Transverse colon (tissue), 4 donors: ENCODE measurements at regions of chr5 and their contacts with region 1.

Region 1: DNA sequence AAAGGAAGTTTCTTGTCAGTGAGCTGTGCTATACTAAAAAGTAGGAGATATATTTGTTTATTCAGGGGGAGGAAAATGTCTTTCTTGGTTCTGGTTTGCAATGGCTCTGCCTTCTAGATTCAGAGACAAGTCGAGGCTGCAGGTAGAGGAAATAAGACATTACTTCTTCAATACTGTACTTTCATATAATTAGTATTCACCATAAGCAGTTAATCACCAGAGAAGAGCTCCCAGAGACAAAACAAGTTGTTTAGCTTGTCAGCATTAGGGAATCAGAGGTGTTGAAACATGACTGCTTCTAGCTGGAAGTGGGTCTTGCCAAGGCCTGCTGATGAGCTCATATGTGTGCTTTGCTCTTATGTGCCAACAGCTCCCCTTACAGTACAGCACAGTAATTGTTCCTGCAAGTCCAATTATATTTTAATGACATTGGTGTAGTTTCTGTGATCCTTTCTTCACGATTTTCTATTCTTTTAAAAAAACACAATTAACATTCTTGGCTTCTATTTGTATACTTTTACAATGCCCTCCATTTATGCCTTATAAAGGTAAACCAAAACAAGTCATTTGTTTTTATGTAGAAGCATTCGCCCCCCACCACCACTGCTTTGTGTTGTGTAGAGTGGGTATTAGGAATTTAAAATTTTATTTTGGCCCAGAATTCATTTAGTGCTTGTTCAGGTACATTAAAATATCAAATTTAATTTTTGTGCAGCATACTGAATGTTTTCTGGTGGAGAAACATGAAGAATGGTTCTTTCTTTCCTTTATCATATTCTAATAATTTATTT is 112.2 kb downstream of the RPS23 start:
- DNase-seq: peak; percentile 61
- H3K4me3 ChIP-seq: no peak overlapping the region
- H3K27ac ChIP-seq: peak overlapping the region; percentile 45 to 65 (median 56)
- H3K4me1 ChIP-seq: peaks cover 4 to 26% (median 8%) of the 10 kb centered on the region in 4 donors
- H3K27me3 ChIP-seq: no peaks in the 10 kb centered on the region
- CTCF ChIP-seq: peak; percentile 65 to 69 (median 68)
- EP300 ChIP-seq: no peak
- POLR2A ChIP-seq: no peak

Region 2: DNA sequence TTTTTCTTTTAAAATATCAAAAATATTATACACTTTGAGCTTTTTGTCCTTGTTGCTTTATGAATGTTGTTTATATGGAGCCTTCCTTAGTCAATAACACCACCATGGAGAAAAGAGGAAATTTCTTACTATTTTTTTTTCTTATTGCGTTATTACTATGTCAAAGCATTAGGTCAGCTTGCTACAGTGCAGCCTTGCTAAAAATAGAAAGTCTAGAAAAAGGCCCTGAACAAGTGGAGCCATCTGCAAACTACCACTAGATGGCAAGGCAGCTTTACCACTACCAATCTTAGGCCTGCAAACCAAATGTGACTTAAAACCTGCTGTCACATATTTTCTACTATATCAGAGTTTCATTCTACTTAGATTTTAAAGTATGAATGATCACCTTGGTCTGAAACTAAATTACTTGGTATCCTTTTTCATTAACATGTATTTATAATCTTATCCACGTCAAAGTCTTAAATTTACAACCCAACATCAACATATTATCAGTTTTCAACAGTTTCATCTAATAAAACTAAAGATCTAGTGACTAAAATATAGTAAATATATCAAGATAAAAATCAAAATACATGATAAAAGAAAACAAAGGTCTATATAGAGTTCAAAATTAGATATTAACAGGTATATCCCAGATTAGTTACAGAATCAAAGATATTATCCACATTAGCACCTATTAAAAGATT is 658.9 kb before region 1 on chr5:
- in situ Hi-C with region 1: loop called in 1 of 4 experiments (anchors 25 kb)
- intact Hi-C with region 1: no loop called
- DNase-seq: peak; percentile 48
- H3K4me3 ChIP-seq: no peak overlapping the region
- H3K27ac ChIP-seq: peak overlapping the region in 3 of 4 donors; percentile 9 to 50 (median 38)
- H3K4me1 ChIP-seq: peaks cover 0 to 13% (median 2%) of the 10 kb centered on the region in 4 donors
- H3K27me3 ChIP-seq: no peaks in the 10 kb centered on the region
- CTCF ChIP-seq: peak; percentile 77 to 86 (median 81)
- EP300 ChIP-seq: no peak
- POLR2A ChIP-seq: no peak

Region 3: DNA sequence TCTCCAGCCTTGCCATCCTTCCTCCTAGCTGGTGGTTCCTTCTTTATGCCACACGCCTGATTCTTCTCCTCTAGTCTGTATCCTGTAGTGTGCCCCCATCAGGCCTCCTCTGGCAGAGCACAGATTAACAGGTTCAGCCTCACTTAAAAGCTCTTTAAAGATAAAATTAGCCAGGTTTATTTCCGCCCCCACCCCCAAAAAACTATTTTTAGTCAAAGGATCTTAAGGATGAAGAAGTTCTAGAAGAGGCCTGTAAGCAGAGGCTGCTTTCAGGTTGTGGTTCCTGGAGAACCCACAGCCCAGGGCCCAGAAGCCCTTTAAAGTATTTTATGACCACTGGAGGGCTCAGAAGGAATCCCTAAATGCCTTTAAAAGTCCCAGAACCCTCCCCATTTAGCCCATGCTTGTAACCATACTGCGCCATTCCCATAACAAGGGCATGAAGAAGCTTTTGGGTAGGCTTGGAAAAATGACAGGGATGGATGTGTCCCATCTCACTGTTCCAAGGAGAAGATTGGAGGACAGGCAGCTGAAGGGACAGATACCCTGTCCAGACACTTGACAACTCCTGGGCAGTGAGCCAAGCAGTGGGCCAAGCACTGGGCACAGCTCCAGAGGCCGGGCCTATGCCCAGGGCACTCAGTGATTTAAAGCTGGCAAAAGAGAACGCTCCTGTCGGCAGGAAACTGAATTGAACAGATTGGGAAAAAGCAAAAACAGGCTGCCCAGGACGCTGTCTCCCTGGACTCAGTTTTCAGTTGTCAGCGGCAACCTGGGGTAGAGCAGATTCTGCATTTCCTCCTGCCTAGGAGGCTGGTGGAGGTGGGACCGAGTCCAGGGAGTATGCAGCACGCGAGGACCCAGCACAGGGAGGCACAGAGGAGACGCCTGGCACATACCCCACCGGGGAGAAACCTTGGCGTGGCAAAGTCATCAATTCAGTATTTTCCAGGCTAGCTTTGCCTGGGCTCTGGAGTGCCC is 308.7 kb before region 1 on chr5:
- in situ Hi-C with region 1: loop called in 1 of 4 experiments (anchors 10 kb)
- intact Hi-C with region 1: loop called (anchors 5 kb)
- DNase-seq: peak; percentile 38
- H3K4me3 ChIP-seq: no peak overlapping the region
- H3K27ac ChIP-seq: peak overlapping the region in 3 of 4 donors; percentile 31 to 40 (median 38)
- H3K4me1 ChIP-seq: peaks cover 3 to 27% (median 7%) of the 10 kb centered on the region in 4 donors
- H3K27me3 ChIP-seq: no peaks in the 10 kb centered on the region
- CTCF ChIP-seq: peak in 2 of 5 experiments; percentile 9 to 35
- EP300 ChIP-seq: no peak
- POLR2A ChIP-seq: no peak